ENCODE measurements at regions of chr1 and their contacts with region 1.

Region 1: DNA sequence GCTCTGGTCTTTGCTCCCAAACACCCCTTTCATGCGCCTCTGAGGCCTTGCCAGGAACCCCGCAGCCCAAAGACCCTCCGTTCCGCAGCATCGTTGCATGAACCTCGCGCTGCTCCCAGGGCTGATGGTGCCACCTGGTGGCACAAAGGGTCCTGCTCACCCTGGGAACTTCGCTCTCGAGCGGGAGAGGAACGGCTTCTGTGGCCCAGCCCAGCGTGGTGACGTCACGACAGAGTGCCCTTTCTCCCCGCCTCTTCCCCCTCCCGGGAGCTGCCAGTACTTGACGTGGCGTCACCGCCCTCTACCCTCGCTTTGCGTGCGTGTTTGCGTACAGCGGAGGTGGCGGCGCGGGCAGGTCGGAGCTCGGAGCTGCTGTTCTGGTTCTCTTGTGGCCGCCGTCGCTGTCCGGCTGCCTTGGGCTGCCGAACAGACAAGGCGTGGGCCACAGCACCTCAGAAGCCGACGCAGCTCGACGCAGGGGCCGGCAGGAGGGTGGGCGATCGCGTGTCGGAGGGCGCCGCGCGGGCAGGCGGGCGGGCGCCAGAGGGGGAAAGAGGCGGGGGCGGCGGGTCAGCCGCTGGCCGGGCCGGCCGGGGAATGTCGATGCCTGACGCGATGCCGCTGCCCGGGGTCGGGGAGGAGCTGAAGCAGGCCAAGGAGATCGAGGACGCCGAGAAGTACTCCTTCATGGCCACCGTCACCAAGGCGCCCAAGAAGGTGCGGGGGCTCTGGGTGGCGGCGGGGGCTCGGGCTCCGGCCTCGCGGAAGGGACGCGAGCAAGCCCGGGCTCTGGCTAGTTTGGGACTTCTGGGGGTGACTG is at the start of gene AHCYL1:
- DNase-seq: peak; percentile 100
- H3K4me3 Mint-ChIP-seq: peak within 1 kb of the TSS; percentile 97
- H3K27ac Mint-ChIP-seq: peak within 1 kb of the TSS; percentile 92
- H3K4me1 Mint-ChIP-seq: peaks cover 28% of the 10 kb centered on the region
- H3K27me3 Mint-ChIP-seq: no peaks in the 10 kb centered on the region
- total RNA-seq, gene AHCYL1: 70.0 to 75.1 TPM

Region 2: GRCh38 chr1:109483672-109484518 is 500.8 kb before region 1 on chr1 and contains the start of gene ATXN7L2:
- CTCF ChIA-PET with region 1: no interaction called
- intact Hi-C with region 1: loop called (anchors 5 kb)
- DNase-seq: peak; percentile 93
- H3K4me3 Mint-ChIP-seq: peak within 1 kb of the TSS; percentile 95
- H3K27ac Mint-ChIP-seq: peak within 1 kb of the TSS; percentile 85
- H3K4me1 Mint-ChIP-seq: peaks cover 24% of the 10 kb centered on the region
- H3K27me3 Mint-ChIP-seq: no peaks in the 10 kb centered on the region
- total RNA-seq, gene ATXN7L2: 15.2 to 16.4 TPM

Region 3: GRCh38 chr1:109773146-109773899 is 211.3 kb before region 1 on chr1:
- CTCF ChIA-PET with region 1: interaction called, 622 read pairs
- intact Hi-C with region 1: loop called (anchors 1 kb)
- DNase-seq: peak; percentile 85
- H3K4me3 Mint-ChIP-seq: no peak overlapping the region
- H3K27ac Mint-ChIP-seq: no peak overlapping the region
- H3K4me1 Mint-ChIP-seq: no peaks in the 10 kb centered on the region
- H3K27me3 Mint-ChIP-seq: no peaks in the 10 kb centered on the region

Region 4: DNA sequence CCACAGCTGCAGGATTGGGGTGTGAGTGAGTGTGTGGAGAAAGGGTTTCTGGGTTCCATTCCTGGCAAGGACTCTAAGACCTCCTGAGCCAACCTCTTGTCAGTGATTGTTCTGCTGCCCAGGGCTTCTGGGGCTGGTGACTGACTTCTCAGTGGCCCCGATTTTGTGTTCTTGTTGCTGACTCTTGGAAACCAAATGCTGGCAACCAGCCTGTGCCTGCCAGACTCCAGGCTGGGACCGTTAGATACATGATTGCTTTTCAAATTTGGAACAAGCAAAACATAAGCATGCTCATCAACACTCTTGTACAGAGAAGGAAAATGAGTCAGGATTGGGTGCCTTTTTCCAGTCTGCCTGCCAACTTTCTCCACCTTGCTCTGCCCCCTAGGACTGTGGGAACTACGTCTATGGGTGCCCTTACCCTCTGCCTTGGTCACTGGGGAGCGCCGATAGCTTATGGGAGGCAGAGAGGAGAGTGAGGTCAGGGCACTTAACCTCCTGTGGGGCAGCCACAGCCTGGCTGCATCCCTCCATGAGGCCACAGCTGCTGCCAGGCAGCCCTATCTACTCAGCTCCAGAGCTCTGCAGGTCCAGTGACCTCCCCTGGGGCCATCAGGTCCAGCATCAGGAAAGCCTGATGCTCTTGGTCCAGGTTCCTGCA is 181.6 kb before region 1 on chr1:
- CTCF ChIA-PET with region 1: interaction called, 18 read pairs
- intact Hi-C with region 1: no loop called
- DNase-seq: peak; percentile 29
- H3K4me3 Mint-ChIP-seq: peak overlapping the region; percentile 36
- H3K27ac Mint-ChIP-seq: peak overlapping the region; percentile 73
- H3K4me1 Mint-ChIP-seq: peaks cover 50% of the 10 kb centered on the region
- H3K27me3 Mint-ChIP-seq: no peaks in the 10 kb centered on the region

Region 5: GRCh38 chr1:109933856-109934711 is 50.6 kb before region 1 on chr1:
- CTCF ChIA-PET with region 1: no interaction called
- intact Hi-C with region 1: no loop called
- DNase-seq: no peak
- H3K4me3 Mint-ChIP-seq: no peak overlapping the region
- H3K27ac Mint-ChIP-seq: no peak overlapping the region
- H3K4me1 Mint-ChIP-seq: peaks cover 2% of the 10 kb centered on the region
- H3K27me3 Mint-ChIP-seq: no peaks in the 10 kb centered on the region

Region 6: DNA sequence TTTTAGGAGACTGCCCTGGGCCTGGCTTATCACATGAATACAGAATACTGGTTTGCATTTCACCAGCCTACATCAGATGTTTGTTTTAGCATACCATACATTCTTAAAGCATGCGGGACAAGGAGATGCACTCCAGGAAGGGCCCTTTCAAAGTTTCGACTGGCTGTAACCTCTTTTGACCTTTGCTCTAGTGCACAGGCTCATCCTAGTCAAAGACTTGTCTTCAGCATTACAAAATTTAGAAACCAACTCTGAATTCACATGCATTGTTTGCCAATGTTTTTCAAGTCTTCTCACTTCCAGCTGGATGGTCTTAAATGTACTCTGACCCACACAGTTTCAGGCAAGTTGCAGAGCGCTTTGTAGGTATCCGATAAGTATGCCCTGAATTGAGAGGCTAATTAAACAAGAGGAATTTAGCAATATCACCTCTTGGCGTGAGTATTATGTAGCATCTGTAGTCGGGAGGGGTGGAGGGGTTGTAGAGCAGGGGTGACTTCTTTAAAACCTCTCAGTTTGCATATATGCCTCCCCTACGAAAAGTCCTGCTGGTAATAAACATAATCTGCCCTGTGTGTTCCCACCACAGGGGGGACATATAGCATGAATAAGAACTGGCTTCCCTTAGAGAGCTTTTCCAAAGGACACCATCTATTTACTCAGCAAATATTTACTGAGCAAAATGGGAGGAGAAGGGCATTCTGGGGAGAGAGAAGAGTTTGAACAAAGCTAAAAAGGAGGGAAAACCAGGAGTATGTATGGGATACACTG is 24.5 kb before region 1 on chr1:
- CTCF ChIA-PET with region 1: interaction called, 12 read pairs
- intact Hi-C with region 1: no loop called
- DNase-seq: no peak
- H3K4me3 Mint-ChIP-seq: no peak overlapping the region
- H3K27ac Mint-ChIP-seq: no peak overlapping the region
- H3K4me1 Mint-ChIP-seq: no peaks in the 10 kb centered on the region
- H3K27me3 Mint-ChIP-seq: no peaks in the 10 kb centered on the region

Region 7: GRCh38 chr1:110034451-110035235 is 50.0 kb after region 1 on chr1 and contains the start of gene STRIP1:
- CTCF ChIA-PET with region 1: interaction called, 13 read pairs
- intact Hi-C with region 1: loop called (anchors 1 kb)
- DNase-seq: peak; percentile 96
- H3K4me3 Mint-ChIP-seq: peak within 1 kb of the TSS; percentile 91
- H3K27ac Mint-ChIP-seq: peak within 1 kb of the TSS; percentile 79
- H3K4me1 Mint-ChIP-seq: peaks cover 51% of the 10 kb centered on the region
- H3K27me3 Mint-ChIP-seq: no peaks in the 10 kb centered on the region
- total RNA-seq, gene STRIP1: 20.7 to 22.8 TPM